ENCODE measurements at regions of chr19 and their contacts with region 1.

Region 1: GRCh38 chr19:53103198-53103944 is at the start of gene ZNF160:
- DNase-seq: peak; percentile 100
- ATAC-seq: peak; percentile 96
- H3K4me3 Mint-ChIP-seq: peak within 1 kb of the TSS; percentile 87
- H3K27ac Mint-ChIP-seq: peak within 1 kb of the TSS; percentile 91
- H3K4me1 Mint-ChIP-seq: peaks cover 18% of the 10 kb centered on the region
- H3K27me3 Mint-ChIP-seq: no peaks in the 10 kb centered on the region
- total RNA-seq, gene ZNF160: 42.2 to 53.0 TPM

Region 2: DNA sequence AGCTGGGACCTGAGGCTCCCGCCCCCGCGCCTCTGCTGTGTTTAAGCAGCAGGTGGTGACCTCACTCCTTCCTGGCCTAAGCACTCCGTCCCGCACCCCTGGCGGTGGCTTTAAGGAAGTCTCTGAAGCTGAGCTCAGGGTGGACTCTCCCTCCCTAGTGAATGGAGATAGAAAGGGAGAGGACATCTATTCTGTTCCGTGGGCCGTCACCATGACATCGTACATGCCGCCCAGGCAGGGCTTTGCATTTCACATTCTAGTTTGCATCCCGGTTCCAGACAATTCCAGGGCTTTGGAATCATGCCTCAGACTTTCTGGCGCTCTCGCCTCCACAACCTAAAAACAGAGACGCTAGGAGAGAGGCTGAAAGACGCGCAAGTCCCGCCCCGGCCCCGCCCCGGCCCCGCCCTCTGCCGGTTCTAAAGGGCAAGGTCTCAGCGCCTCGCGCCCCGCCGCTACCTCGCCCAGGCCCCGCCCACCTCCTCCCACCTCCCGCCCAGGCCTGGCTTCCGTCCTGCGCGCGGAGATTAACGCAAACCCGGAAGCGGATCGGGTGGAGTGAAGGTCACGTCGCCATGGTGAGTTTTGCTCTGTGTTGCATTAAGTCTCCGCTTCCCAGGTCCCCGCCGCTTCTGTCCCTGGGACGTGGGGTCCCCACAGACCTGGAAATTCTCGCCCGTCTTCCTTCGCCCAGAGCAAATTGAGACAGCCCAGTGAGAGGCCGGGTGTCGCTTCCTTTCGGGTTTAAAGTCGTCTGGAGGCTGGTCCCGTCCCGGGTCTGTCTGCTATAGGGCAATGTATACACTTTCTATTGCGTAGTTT is 576.0 kb before region 1 on chr19 and contains the start of gene ZNF808:
- CTCF ChIA-PET with region 1: no interaction called
- POLR2A ChIA-PET with region 1: no interaction called
- intact Hi-C with region 1: loop called in 1 of 2 experiments (anchors 1 kb)
- DNase-seq: peak; percentile 99
- ATAC-seq: peak; percentile 92
- H3K4me3 Mint-ChIP-seq: peak within 1 kb of the TSS; percentile 91
- H3K27ac Mint-ChIP-seq: peak within 1 kb of the TSS; percentile 94
- H3K4me1 Mint-ChIP-seq: peaks cover 23% of the 10 kb centered on the region
- H3K27me3 Mint-ChIP-seq: no peaks in the 10 kb centered on the region
- total RNA-seq, gene ZNF808: 25.7 to 29.9 TPM

Region 3: DNA sequence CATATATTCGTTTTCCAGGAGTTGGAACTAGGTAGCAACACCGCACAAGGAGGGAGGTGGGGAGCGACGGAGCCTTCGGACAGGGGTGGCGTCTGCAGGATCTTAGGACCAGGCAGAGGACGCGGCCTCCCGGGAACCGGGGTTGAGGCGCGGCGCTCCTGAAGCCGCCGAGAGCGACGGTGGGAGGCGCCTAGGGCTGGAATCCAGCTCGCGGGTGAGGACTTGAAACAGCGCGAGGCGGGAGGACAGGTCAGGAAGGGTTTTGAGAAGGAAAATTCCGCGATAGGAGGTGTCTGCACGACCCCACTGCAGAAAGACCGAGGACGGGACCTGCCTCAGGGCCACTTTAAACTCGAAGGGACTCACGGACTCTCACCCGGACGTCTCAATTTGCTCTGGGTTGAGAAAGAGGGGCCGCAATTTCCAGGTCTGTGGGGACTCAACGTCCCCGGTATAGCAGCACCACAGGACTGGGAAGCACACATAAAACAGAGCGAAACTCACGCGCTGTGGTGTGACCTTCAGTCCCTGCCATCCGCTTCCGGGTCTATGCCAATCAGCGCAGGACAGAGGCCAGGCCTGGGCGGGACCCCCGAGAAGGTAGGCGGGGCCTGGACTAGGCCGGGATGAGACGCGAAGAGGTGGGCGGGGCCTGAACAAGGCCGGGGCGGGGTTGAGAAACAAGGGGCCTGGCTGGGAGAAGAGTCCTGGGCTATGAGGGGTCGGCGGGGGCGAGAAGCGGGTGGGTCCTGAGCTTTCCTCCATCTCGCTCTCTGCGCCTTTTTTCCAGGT is 206.0 kb before region 1 on chr19 and contains the start of gene ZNF320:
- CTCF ChIA-PET with region 1: no interaction called
- POLR2A ChIA-PET with region 1: no interaction called
- intact Hi-C with region 1: loop called in 1 of 2 experiments (anchors 1 kb)
- DNase-seq: peak; percentile 98
- ATAC-seq: peak; percentile 100
- H3K4me3 Mint-ChIP-seq: peak within 1 kb of the TSS; percentile 88
- H3K27ac Mint-ChIP-seq: peak within 1 kb of the TSS; percentile 93
- H3K4me1 Mint-ChIP-seq: peaks cover 31% of the 10 kb centered on the region
- H3K27me3 Mint-ChIP-seq: no peaks in the 10 kb centered on the region
- total RNA-seq, gene ZNF320: 10.8 to 12.2 TPM

Region 4: DNA sequence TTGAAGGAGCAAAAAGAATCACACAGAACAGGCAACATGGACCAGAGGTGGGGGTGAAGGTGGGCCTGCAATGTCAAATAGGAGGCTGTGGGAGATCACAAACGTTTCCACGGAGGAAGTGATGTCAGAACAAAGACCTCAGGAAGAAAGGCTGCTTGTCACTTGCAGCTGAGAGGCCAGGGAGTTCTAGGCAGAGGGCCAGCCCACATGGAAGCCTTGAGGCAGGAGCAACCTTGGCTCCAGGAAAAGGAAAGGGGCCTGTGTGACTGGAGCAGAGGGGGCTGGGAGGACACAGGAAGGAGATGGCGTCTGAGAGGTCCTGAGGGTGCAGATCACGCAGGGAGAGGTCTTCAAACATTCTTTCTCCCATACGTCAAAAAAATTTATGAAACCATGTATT is 16.4 kb before region 1 on chr19:
- CTCF ChIA-PET with region 1: no interaction called
- POLR2A ChIA-PET with region 1: no interaction called
- intact Hi-C with region 1: no loop called
- DNase-seq: no peak
- ATAC-seq: no peak
- H3K4me3 Mint-ChIP-seq: no peak overlapping the region
- H3K27ac Mint-ChIP-seq: peak overlapping the region; percentile 67
- H3K4me1 Mint-ChIP-seq: no peaks in the 10 kb centered on the region
- H3K27me3 Mint-ChIP-seq: no peaks in the 10 kb centered on the region

Region 5: DNA sequence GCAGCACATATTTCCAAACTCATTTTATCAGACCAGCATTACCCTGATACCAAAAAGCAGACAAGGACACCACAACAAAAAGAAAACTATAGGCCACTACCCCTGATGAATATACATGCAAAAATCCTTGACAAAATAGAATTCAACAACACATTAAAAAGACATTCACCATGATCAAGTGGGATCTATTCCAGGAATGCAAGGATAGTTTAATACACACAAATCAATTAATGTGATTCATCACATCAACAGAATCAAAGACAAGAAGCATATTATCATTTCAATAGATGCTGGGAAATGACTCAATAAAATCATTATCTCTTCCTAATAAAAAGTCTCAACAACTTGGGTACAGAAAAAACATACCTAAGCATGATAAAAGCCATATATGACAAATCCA is 44.3 kb after region 1 on chr19:
- CTCF ChIA-PET with region 1: no interaction called
- POLR2A ChIA-PET with region 1: no interaction called
- intact Hi-C with region 1: no loop called
- DNase-seq: no peak
- ATAC-seq: no peak
- H3K4me3 Mint-ChIP-seq: no peak overlapping the region
- H3K27ac Mint-ChIP-seq: no peak overlapping the region
- H3K4me1 Mint-ChIP-seq: no peaks in the 10 kb centered on the region
- H3K27me3 Mint-ChIP-seq: no peaks in the 10 kb centered on the region

Region 6: DNA sequence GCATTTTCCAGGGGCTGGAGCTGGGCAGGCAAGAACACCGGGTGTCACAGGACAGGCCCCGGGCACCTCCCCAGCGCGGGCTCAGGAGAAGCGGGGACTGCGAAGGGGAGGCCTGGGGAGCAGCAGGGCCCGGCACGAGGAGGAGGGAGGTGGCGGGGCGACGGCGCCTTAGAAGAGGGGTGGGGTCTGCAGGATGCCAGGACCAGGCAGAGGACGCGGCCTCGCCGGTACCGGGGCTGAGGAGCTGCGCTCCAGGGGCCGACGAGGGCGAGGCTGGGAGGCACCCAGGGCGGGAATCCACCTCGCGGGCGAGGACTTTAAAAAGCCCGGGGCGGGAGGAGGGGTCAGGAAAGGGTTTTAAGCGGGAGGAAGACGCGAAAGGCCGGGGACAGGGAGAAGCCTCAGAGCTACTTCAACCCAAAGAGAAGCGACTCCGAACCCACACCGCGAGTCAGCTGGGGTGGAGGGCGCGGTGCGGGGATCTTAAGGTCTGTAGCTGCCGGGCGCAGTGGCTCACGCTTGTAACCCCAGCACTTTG is 54.8 kb after region 1 on chr19:
- CTCF ChIA-PET with region 1: no interaction called
- POLR2A ChIA-PET with region 1: no interaction called
- intact Hi-C with region 1: loop called (anchors 1 to 2 kb)
- DNase-seq: peak; percentile 64
- ATAC-seq: peak; percentile 36
- H3K4me3 Mint-ChIP-seq: peak overlapping the region; percentile 72
- H3K27ac Mint-ChIP-seq: peak overlapping the region; percentile 74
- H3K4me1 Mint-ChIP-seq: peaks cover 14% of the 10 kb centered on the region
- H3K27me3 Mint-ChIP-seq: no peaks in the 10 kb centered on the region

Region 7: DNA sequence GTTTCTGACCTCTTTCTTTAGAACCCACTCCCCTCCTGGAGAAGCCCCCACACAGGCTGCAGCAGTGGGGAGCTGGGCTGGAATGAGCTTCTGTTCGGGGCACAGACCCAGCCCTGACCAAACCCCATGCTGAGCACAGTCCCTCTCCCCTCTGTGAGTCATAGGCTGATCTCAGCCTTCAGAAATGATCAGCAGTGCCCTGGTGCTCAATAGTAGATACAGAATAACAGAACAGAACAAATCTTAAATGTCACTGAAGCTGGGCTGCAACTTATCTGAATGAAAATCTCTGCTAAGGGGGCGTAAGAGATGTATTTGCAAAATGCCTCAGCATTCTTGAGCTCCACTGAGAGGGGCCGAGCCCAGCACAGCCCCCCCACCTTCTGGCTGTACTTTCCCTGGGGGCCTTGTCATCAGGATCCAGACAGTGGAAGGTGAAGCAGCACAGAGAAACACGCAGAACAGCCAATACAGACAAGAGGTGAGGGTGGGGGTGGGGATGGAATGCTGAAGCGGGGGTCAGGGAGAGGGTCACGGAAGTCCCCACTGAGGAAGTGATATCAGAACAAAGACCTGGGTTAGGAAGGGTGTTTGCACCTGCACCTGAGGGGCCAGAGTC is 79.9 kb after region 1 on chr19:
- CTCF ChIA-PET with region 1: no interaction called
- POLR2A ChIA-PET with region 1: no interaction called
- intact Hi-C with region 1: no loop called
- DNase-seq: no peak
- ATAC-seq: no peak
- H3K4me3 Mint-ChIP-seq: no peak overlapping the region
- H3K27ac Mint-ChIP-seq: no peak overlapping the region
- H3K4me1 Mint-ChIP-seq: no peaks in the 10 kb centered on the region
- H3K27me3 Mint-ChIP-seq: no peaks in the 10 kb centered on the region

Region 8: DNA sequence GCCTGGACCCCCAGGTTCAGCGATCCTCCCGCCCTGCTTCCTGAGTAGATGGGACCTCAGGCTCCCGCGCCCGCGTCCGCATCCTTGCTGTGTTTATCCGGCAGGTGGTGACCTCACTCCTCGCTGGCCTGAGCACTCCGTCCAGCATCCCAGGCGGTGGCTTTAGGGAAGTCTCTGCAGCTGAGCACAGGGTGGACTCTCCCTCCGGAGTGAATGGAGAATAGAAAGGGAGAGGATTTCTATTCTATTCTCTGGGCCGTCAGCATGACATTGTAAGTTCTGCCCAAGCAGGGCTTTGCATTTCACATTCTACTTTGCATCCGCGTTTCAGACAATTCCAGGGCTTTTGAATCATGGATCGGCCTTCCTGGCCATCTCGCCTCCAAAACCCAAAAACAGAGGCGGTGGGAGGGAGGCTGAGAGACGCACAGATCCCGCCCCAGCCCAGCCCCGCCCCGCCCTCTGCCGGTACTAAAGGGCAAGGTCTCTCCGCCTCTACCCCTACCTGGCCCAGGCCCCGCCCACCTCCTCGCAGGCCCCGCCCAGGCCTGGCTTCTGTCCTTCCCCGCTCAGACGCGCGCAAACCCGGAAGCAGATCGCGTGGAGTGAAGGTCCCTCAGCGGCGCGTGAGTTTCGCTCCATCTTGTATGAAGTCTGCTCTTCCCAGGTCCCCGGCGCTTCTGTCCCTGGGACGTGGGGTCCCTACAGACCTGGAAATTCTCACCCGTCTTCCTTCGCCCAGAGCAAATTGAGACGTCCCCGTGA is 261.9 kb after region 1 on chr19 and contains the start of gene ZNF525:
- CTCF ChIA-PET with region 1: no interaction called
- POLR2A ChIA-PET with region 1: no interaction called
- intact Hi-C with region 1: loop called in 1 of 2 experiments (anchors 1 kb)
- DNase-seq: peak; percentile 98
- ATAC-seq: peak; percentile 100
- H3K4me3 Mint-ChIP-seq: peak within 1 kb of the TSS; percentile 93
- H3K27ac Mint-ChIP-seq: peak within 1 kb of the TSS; percentile 95
- H3K4me1 Mint-ChIP-seq: peaks cover 26% of the 10 kb centered on the region
- H3K27me3 Mint-ChIP-seq: no peaks in the 10 kb centered on the region
- total RNA-seq, gene ZNF525: 21.5 to 27.8 TPM

Region 9: GRCh38 chr19:53520550-53521372 is 417.4 kb after region 1 on chr19:
- CTCF ChIA-PET with region 1: no interaction called
- POLR2A ChIA-PET with region 1: no interaction called
- intact Hi-C with region 1: loop called in 1 of 2 experiments (anchors 5 kb)
- DNase-seq: peak; percentile 93
- ATAC-seq: peak; percentile 99
- H3K4me3 Mint-ChIP-seq: peak overlapping the region; percentile 100
- H3K27ac Mint-ChIP-seq: peak overlapping the region; percentile 89
- H3K4me1 Mint-ChIP-seq: peaks cover 15% of the 10 kb centered on the region
- H3K27me3 Mint-ChIP-seq: no peaks in the 10 kb centered on the region